ENCODE measurements at regions of chr2 and their contacts with region 1.

Region 1: GRCh38 chr2:121664086-121664485 is 14.8 kb upstream of the CLASP1 start:
- DNase-seq: no peak
- ATAC-seq: no peak
- H3K4me3 ChIP-seq: no peak overlapping the region
- H3K27ac ChIP-seq: peak overlapping the region in 3 of 10 donors; percentile 5 to 64 (median 49)
- H3K4me1 ChIP-seq: peaks cover 0 to 33% (median 17%) of the 10 kb centered on the region in 9 donors
- H3K27me3 ChIP-seq: no peaks in the 10 kb centered on the region
- CTCF ChIP-seq: no peak

Region 2: DNA sequence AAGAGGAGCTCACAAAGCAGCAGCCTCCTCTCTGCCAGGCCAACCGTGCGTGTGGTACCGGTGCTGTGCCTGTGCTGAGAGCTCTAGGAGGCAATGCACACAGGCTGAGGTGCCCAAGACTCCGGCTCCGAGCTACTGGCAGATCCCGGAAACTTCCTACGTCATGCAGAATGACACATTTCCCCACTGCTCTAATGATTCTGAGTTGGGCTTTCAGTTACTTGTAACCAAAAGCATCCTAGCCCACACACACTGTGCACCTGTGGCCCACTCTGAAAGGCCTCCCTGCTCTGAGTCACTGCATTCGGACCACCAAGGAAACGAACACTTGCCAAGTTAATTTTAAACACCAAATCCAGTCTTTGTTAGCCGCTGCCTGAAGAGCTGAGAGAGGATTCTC is 142.7 kb before region 1 on chr2:
- intact Hi-C with region 1: no loop called
- DNase-seq: no peak
- ATAC-seq: peak in 1 of 8 donors; percentile 68
- H3K4me3 ChIP-seq: no peak overlapping the region
- H3K27ac ChIP-seq: peak overlapping the region in 1 of 10 donors; percentile 13
- H3K4me1 ChIP-seq: peaks cover 0 to 40% (median 31%) of the 10 kb centered on the region in 9 donors
- H3K27me3 ChIP-seq: no peaks in the 10 kb centered on the region
- CTCF ChIP-seq: no peak

Region 3: DNA sequence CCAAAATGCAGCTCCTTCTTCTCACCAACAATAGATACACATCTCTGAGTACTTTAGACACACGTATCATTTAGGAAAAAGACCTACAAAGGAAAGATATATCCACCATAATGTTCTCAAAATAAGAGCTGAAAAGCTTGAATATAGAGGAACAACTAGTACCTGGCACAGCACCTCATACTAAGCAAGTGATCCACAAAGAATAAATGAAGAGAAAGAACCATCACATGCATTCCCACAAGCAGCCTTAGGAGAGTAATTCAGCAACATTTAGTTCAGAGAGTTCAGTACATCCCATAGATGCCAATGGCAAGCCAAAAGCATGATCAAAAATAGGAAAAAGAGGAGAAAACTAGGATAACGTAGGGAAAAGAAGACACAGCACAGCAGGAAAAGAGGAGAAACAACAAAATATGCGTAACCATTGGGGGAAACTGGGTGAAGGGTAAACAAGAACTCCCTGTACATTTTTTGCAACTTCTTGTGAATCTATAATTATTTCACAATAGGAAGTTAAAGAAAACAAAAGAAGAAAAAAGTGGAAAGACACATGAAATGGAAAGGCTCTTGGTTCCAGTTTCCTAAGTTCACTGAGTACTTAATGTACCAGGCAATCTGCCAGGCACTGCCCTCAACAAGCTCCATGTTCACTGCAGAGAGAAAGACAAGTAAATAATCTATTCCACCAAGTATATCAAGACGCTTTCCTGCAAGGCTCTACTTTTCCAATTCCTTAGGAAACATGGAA is 37.1 kb before region 1 on chr2:
- intact Hi-C with region 1: no loop called
- DNase-seq: no peak
- ATAC-seq: peak in 3 of 8 donors; percentile 56 to 90 (median 70)
- H3K4me3 ChIP-seq: no peak overlapping the region
- H3K27ac ChIP-seq: peak overlapping the region; percentile 1 to 76 (median 32)
- H3K4me1 ChIP-seq: peaks cover 0 to 38% (median 21%) of the 10 kb centered on the region in 9 donors
- H3K27me3 ChIP-seq: no peaks in the 10 kb centered on the region
- CTCF ChIP-seq: no peak

Region 4: DNA sequence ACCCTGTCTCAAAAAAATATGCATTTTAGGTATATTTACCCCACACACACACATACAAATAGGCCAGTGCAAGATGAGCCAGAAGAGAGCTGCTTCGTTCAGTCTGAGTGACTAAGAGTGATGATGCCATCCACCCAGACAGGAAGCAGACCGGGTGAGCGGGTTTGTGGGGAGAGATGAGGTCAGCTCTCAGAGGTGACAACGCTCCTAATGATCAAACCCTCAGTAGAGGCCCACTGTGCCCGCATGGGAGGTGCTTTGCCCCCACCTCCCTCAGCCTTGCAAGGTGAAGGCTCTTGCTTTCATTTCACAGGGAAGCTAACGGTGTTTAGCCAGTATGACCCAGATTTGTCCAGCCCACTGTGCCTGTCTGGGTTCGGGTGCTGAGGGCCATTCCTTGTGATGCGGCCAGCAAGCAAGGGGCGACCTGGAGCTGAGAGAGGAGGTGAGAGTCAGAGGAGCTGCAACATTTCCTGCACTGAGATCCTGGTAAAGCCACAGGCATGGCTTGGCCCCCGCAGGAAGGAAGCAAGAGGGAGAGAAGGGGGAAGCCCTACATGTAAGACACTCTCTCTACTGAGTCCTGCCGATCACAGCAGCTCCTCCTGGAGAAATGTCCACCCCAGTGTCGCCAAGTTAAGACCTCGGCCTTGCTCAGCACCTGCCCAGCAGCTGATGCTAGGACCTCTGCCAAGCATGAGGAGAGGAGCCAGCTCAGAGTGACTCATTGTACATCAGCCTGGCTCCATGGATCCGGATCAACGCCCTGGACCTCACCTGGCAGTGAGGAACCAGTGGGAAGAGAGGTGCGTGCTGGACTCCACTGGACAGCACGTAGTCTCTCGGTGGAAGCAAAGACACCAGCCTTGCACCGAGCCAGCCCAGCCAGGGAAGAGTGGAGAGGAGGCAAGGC is 35.6 kb after region 1 on chr2:
- intact Hi-C with region 1: loop called in 1 of 10 experiments (anchors 5 kb)
- DNase-seq: peak in 1 of 2 donors; percentile 32
- ATAC-seq: peak; percentile 32 to 78 (median 60)
- H3K4me3 ChIP-seq: peak overlapping the region in 1 of 10 donors; percentile 41
- H3K27ac ChIP-seq: peak overlapping the region; percentile 13 to 84 (median 70)
- H3K4me1 ChIP-seq: peaks cover 0 to 35% (median 15%) of the 10 kb centered on the region in 9 donors
- H3K27me3 ChIP-seq: no peaks in the 10 kb centered on the region
- CTCF ChIP-seq: no peak

Region 5: DNA sequence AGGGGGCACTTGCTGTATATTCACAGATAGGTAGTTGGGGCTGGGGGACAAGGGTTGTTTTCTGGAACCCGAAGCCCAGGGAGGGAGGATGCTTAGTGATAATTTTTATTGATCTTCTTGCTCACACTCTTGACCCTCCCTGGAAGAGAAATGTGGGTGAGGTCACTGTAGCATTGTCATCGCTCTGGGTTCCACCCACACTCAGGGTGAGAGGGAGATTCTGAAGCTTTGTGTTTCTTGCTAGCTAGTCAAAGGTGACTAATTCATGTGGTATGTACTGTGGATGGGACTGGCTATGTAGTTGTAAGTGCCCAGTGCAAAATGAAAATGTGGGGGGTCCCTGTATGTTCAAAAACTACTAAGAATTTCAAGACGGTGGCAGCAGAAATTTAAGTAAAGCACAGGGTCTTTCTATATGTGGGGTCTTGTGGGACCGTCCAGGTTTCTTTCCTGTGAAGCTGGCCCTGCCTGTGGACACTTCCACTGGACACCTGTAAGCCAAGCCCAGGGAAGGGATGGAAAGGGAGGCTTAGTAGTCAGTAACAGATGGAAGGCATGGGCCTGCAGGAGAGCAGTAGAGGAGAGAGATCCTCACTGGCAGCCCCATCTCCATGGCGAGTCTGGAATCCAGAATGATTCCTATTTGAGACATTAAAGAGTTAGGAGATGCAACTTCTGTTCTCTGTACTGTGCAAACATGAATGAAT is 126.3 kb after region 1 on chr2:
- intact Hi-C with region 1: no loop called
- DNase-seq: no peak
- ATAC-seq: no peak
- H3K4me3 ChIP-seq: no peak overlapping the region
- H3K27ac ChIP-seq: no peak overlapping the region
- H3K4me1 ChIP-seq: no peaks in the 10 kb centered on the region
- H3K27me3 ChIP-seq: peaks cover 0 to 22% (median 4%) of the 10 kb centered on the region in 7 donors
- CTCF ChIP-seq: no peak

Measured in heart right ventricle (tissue), 16 donors.